Motor neuron (in vitro differentiated cells): ENCODE measurements at regions of chr5 and their contacts with region 1.

Region 1: GRCh38 chr5:34915139-34915855 is at the starts of genes BRIX1 and RAD1:
- ATAC-seq: peak; percentile 96 to 100 (median 99)
- H3K4me3 ChIP-seq: peak within 1 kb of the TSS; percentile 85 to 99 (median 91)
- H3K27ac ChIP-seq: peak within 1 kb of the TSS; percentile 86 to 96
- H3K4me1 ChIP-seq: peaks cover 6 to 19% of the 10 kb centered on the region in 2 donors
- total RNA-seq, gene BRIX1: 28.6 to 57.1 (median 44.1) TPM
- total RNA-seq, gene RAD1: 18.7 to 38.8 (median 26.1) TPM

Region 2: DNA sequence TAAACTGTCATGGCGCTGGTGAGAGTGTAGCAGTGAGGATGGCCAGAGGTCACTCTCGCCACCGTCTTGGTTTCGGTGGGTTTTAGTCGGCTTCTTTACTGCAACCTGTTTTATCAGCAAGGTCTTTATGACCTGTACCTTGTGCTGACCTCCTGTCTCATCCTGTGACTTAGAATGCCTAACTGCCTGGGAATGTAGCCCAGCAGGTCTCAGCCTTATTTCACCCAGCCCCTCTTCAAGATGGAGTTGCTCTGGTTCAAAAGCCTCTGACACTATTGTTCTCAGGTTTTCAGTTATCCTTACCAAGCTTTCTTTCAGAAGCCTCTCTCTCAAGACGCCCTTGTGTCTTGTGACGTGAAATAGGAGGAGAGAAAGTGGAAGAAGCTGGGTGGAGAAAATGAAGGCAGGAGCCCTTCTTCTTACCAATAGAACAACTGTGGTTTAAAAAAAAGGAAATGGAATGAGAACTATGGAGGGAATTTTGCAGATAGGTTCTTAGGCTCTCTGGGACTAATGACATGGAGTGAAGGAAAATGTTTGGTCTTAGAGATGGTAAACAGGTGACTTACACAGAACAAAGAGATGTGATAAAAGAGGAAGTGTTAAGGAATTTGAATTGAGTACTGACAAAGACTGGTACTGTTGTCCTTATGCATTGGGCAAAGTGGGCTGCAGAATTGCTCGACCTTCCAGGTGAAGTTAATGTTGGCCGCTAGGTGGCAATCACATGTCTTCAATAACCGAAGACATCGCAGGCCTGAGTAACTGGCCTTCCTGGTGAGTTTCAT is 392.5 kb before region 1 on chr5:
- in situ Hi-C with region 1: loop called in 1 of 9 experiments (anchors 25 kb)
- ATAC-seq: peak; percentile 76 to 98 (median 88)
- H3K4me3 ChIP-seq: no peak overlapping the region
- H3K27ac ChIP-seq: no peak overlapping the region
- H3K4me1 ChIP-seq: peaks cover 3 to 4% of the 10 kb centered on the region in 2 donors

Region 3: GRCh38 chr5:34721327-34721726 is 194.0 kb before region 1 on chr5:
- in situ Hi-C with region 1: no loop called
- ATAC-seq: peak in 1 of 8 experiments; percentile 62
- H3K4me3 ChIP-seq: no peak overlapping the region
- H3K27ac ChIP-seq: no peak overlapping the region
- H3K4me1 ChIP-seq: peaks cover 28 to 33% of the 10 kb centered on the region in 2 donors